Activated T-helper 1 cell treated with anti-CD3 and anti-CD28 coated beads, Interleukin-12 subunit alpha, Interleukin-12 subunit beta, Interleukin-2, Interleukin-4 antibody, amounts not matched to agents 30 ng/mL and 10 ng/mL and 1 ng/mL, durations not matched to agents 14 hours and 24 hours and 36 hours (primary cell): ENCODE measurements at regions of chr7 and their contacts with region 1.

Region 1: GRCh38 chr7:151028131-151028947 is at the start of gene ABCB8:
- DNase-seq: peak; percentile 98
- H3K4me3 Mint-ChIP-seq: peak within 1 kb of the TSS; percentile 94
- H3K27ac Mint-ChIP-seq: peak within 1 kb of the TSS; percentile 95
- H3K4me1 Mint-ChIP-seq: peaks cover 21% of the 10 kb centered on the region
- H3K27me3 Mint-ChIP-seq: peaks cover 2% of the 10 kb centered on the region
- total RNA-seq, gene ABCB8: 56.9 and 57.9 TPM in 2 replicates

Region 2: DNA sequence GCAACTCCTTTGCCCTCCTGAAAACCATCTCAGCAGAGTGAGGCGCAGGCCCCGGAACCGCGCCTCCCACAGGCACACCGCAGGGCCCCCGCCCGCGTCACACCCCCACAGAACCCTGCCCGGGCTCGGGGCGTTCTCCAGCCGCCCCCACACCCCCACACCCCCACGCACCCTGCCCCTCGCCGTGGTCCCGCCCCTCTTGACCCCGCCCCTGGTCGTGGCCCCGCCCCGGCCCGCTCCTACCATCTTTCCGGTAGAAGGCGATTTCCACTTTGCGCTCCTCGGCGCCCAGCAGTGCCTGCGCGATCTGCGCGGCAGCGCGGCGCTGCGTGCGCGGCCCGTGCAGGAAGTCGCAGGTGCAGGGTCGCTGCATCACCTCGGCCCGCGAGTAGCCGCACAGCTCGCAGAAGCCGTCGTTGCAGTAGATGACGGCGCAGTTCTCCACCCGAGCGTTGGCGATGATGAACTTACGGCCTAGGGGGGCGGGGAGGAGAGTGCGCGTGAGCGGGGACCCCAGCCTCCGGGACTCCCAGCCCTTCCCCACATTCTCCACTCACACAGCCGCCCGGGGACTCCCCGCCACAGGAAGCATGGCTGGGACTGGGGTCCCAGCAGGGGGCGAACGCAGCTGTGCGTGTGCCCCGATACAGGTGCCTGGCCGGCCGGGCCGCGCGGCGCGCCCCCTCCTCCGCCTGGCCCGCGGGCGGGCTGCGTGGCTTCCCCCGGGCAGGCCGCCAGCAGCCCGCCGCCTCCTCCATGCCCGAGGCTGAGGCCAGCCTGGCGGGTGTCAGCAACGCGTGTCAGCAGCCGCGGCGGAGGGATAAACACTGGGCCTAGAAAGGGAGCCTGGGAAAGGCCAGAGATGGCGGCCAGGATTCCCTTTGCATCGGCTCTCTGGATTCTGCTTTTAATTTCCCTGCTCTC is 53.6 kb before region 1 on chr7:
- intact Hi-C with region 1: loop called (anchors 2 kb)
- DNase-seq: peak; percentile 73
- H3K4me3 Mint-ChIP-seq: peak overlapping the region; percentile 83
- H3K27ac Mint-ChIP-seq: peak overlapping the region; percentile 58
- H3K4me1 Mint-ChIP-seq: peaks cover 29% of the 10 kb centered on the region
- H3K27me3 Mint-ChIP-seq: peaks cover 25% of the 10 kb centered on the region

Region 3: DNA sequence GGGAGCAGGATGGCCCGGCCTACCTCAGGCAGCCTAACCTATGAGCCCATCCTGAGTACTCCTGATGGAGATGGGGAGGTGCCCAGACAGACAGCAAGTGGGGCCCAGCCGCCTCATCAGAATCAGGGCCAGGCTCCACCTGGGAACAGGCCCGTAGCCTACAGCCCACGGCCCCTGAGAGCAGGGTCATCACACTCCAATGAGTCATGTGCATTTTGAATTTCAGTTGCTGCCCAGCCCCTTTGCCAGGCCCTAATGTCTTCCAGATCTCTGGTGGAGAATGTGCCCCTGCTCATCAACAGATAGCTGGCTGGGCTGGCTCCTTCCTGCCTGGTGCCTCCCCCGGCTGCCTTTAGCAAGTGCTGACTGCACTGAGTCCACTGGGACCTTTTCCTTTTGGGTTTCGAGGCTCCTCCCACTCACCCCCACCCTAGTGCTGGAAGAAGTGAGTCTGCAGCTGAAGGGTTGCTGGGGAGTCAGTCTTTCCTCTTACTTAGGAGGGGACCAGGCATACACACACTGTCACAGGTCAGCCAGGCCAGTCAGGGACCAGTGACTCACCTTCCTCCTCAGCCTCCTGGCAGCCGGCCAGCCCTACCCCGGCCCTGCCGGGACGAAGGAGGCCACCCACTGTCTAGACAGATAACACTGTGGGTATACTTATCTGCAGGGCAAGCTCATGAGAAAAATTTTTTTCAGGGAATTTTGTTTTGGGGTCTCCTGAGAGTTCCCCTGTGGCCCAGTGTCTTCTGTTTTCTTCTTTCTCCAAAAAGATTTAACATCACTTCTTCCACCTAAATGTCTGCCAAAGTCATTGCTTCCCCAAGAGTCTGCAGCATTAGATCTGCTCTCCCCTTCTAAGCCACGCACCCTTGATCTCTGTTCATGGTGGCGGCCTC is 10.9 kb after region 1 on chr7:
- intact Hi-C with region 1: loop called (anchors 1 kb)
- DNase-seq: no peak
- H3K4me3 Mint-ChIP-seq: peak overlapping the region; percentile 19
- H3K27ac Mint-ChIP-seq: peak overlapping the region; percentile 96
- H3K4me1 Mint-ChIP-seq: peaks cover 18% of the 10 kb centered on the region
- H3K27me3 Mint-ChIP-seq: no peaks in the 10 kb centered on the region

Region 4: DNA sequence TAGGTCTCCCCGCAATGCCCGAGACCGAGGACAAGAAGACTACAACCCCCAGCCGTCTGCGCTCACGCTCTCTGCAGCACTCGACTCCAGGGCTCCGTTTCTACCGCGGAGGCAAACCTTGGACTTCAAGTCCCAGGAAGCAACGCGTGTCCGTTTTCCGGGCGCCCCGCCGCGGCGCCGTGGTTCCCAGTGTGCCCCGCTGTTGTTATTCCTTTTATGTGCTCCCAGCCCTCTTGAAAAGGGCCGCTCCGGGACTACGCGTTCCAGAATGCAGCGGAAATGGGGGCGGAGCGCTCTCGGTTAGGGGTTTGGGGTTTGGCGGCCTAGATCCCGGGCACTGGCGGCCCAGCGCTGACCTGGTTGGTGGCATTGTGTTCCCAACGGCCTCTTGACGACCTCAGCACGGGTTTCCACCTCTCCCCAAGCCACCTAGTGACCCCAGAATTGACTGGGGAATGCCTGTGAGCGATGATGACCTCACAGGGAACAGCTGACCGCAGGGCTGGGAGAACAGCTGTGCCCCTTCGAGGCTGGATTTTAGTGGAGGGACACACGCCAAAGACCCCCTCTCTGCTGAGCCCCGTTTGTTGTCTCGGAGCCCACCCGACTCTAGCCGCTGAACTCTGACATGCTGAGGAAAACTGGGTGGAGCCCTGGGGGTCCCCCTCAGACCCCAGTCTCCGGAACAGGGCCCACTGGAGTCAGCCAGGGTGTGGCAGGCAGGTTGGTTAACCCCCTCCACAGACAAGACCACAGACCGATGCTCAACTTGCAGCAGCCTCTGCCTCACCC is 29.8 kb after region 1 on chr7:
- intact Hi-C with region 1: loop called (anchors 1 kb)
- DNase-seq: peak; percentile 95
- H3K4me3 Mint-ChIP-seq: peak overlapping the region; percentile 93
- H3K27ac Mint-ChIP-seq: peak overlapping the region; percentile 92
- H3K4me1 Mint-ChIP-seq: peaks cover 46% of the 10 kb centered on the region
- H3K27me3 Mint-ChIP-seq: no peaks in the 10 kb centered on the region